Naive thymus-derived CD4-positive, alpha-beta T cell (primary cell): ENCODE measurements at regions of chr20 and their contacts with region 1.

Region 1: GRCh38 chr20:20712474-20713243 is at the start of gene RALGAPA2:
- DNase-seq: peak; percentile 91 to 97 (median 95)
- ATAC-seq: peak; percentile 98
- H3K4me3 ChIP-seq: peak within 1 kb of the TSS; percentile 97
- H3K4me3 Mint-ChIP-seq: peak within 1 kb of the TSS; percentile 89 to 98 (median 96)
- H3K27ac ChIP-seq: peak within 1 kb of the TSS; percentile 91
- H3K27ac Mint-ChIP-seq: peak within 1 kb of the TSS; percentile 90 to 98 (median 95)
- H3K4me1 ChIP-seq: peaks cover 9% of the 10 kb centered on the region in 2 donors
- H3K4me1 Mint-ChIP-seq: peaks cover 23 to 41% (median 29%) of the 10 kb centered on the region in 7 donors
- H3K27me3 ChIP-seq: no peaks in the 10 kb centered on the region
- H3K27me3 Mint-ChIP-seq: no peaks in the 10 kb centered on the region
- total RNA-seq, gene RALGAPA2: 27.5 to 45.4 (median 35.1) TPM

Region 2: DNA sequence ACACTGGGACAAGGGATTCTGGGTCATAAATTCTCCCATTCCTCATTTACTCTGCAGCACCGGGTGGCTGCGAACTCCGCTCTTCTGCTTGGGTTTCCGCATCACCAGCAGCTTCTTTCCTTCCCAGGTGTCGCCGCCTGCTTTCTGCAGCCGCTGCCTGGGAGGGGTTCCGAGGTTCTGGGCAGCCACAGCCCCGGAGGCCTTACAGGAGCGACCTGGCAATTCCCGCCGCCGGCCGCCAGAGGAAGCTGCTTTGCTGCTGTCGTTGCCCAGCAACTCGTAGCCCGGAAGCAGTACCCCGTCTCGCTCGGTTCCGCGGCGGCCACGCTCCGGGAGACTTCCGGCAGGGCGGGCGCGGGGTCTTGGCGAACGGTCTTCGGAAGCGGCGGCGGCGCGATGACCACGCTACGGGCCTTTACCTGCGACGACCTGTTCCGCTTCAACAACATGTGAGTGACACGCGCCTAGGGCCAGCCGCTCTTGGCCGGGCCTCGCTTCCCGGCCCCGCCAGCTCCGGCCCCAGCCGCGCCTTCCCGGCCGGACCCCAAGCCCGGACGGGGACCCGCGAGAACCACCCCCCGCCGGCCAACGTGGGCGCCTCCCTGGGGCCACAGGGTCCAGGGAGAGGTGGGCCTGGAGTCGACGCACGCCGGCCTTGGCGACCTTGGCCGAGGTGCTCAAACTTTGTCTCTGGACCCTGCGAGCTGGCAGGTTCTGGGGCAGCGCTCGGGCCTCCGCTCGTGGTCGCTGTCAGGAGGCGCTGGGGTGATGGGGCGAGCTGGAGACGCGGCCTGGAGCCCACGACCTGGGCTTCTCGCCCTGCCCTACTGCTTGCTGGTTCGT is 695.4 kb before region 1 on chr20 and contains the start of gene NAA20:
- CTCF ChIA-PET with region 1: no interaction called
- POLR2A ChIA-PET with region 1: no interaction called
- intact Hi-C with region 1: loop called (anchors 1 to 2 kb)
- DNase-seq: peak; percentile 80 to 89 (median 87)
- ATAC-seq: peak; percentile 99
- H3K4me3 ChIP-seq: peak within 1 kb of the TSS; percentile 77
- H3K4me3 Mint-ChIP-seq: peak within 1 kb of the TSS; percentile 88 to 96 (median 93)
- H3K27ac ChIP-seq: peak within 1 kb of the TSS; percentile 83
- H3K27ac Mint-ChIP-seq: peak within 1 kb of the TSS; percentile 90 to 96 (median 94)
- H3K4me1 ChIP-seq: peaks cover 9 to 28% of the 10 kb centered on the region in 2 donors
- H3K4me1 Mint-ChIP-seq: peaks cover 38 to 68% (median 63%) of the 10 kb centered on the region in 7 donors
- H3K27me3 ChIP-seq: no peaks in the 10 kb centered on the region
- H3K27me3 Mint-ChIP-seq: no peaks in the 10 kb centered on the region
- total RNA-seq, gene NAA20: 21.5 to 52.6 (median 28.3) TPM

Region 3: GRCh38 chr20:20160520-20160919 is 552.1 kb before region 1 on chr20:
- CTCF ChIA-PET with region 1: no interaction called
- POLR2A ChIA-PET with region 1: no interaction called
- intact Hi-C with region 1: no loop called
- DNase-seq: no peak
- ATAC-seq: no peak
- H3K4me3 ChIP-seq: no peak overlapping the region
- H3K4me3 Mint-ChIP-seq: no peak overlapping the region
- H3K27ac ChIP-seq: no peak overlapping the region
- H3K27ac Mint-ChIP-seq: no peak overlapping the region
- H3K4me1 ChIP-seq: no peaks in the 10 kb centered on the region
- H3K4me1 Mint-ChIP-seq: no peaks in the 10 kb centered on the region
- H3K27me3 ChIP-seq: no peaks in the 10 kb centered on the region
- H3K27me3 Mint-ChIP-seq: peaks cover 0 to 13% (median 4%) of the 10 kb centered on the region in 5 donors

Region 4: GRCh38 chr20:20677186-20677585 is 35.5 kb before region 1 on chr20:
- CTCF ChIA-PET with region 1: interaction called, 5 read pairs
- POLR2A ChIA-PET with region 1: no interaction called
- intact Hi-C with region 1: loop called in 1 of 2 experiments (anchors 5 kb)
- DNase-seq: no peak
- ATAC-seq: no peak
- H3K4me3 ChIP-seq: no peak overlapping the region
- H3K4me3 Mint-ChIP-seq: no peak overlapping the region
- H3K27ac ChIP-seq: no peak overlapping the region
- H3K27ac Mint-ChIP-seq: no peak overlapping the region
- H3K4me1 ChIP-seq: no peaks in the 10 kb centered on the region
- H3K4me1 Mint-ChIP-seq: peaks cover 14 to 52% (median 28%) of the 10 kb centered on the region in 7 donors
- H3K27me3 ChIP-seq: no peaks in the 10 kb centered on the region
- H3K27me3 Mint-ChIP-seq: no peaks in the 10 kb centered on the region

Region 5: GRCh38 chr20:21096321-21097043 is 383.8 kb after region 1 on chr20:
- CTCF ChIA-PET with region 1: no interaction called
- POLR2A ChIA-PET with region 1: no interaction called
- intact Hi-C with region 1: no loop called
- DNase-seq: no peak
- ATAC-seq: peak; percentile 63
- H3K4me3 ChIP-seq: no peak overlapping the region
- H3K4me3 Mint-ChIP-seq: no peak overlapping the region
- H3K27ac ChIP-seq: no peak overlapping the region
- H3K27ac Mint-ChIP-seq: no peak overlapping the region
- H3K4me1 ChIP-seq: peaks cover 5 to 18% of the 10 kb centered on the region in 2 donors
- H3K4me1 Mint-ChIP-seq: peaks cover 6 to 25% (median 23%) of the 10 kb centered on the region in 7 donors
- H3K27me3 ChIP-seq: peaks cover 4 to 54% of the 10 kb centered on the region in 2 donors
- H3K27me3 Mint-ChIP-seq: peaks cover 75 to 93% (median 89%) of the 10 kb centered on the region in 5 donors

Region 6: GRCh38 chr20:21125849-21126580 is 413.4 kb after region 1 on chr20 and contains the start of gene KIZ:
- CTCF ChIA-PET with region 1: no interaction called
- POLR2A ChIA-PET with region 1: interaction called, 5 read pairs
- intact Hi-C with region 1: loop called (anchors 1 to 2 kb)
- DNase-seq: peak; percentile 93 to 100 (median 97)
- ATAC-seq: peak; percentile 100
- H3K4me3 ChIP-seq: peak within 1 kb of the TSS; percentile 56
- H3K4me3 Mint-ChIP-seq: peak within 1 kb of the TSS; percentile 86 to 98 (median 90)
- H3K27ac ChIP-seq: peak within 1 kb of the TSS; percentile 77
- H3K27ac Mint-ChIP-seq: peak within 1 kb of the TSS; percentile 70 to 97 (median 88)
- H3K4me1 ChIP-seq: peaks cover 10 to 16% of the 10 kb centered on the region in 2 donors
- H3K4me1 Mint-ChIP-seq: peaks cover 11 to 35% (median 21%) of the 10 kb centered on the region in 7 donors
- H3K27me3 ChIP-seq: no peaks in the 10 kb centered on the region
- H3K27me3 Mint-ChIP-seq: peaks cover 0 to 4% (median 0%) of the 10 kb centered on the region in 5 donors
- total RNA-seq, gene KIZ: 15.6 to 47.4 (median 32.5) TPM